Mammary epithelial cell (primary cell): ENCODE measurements at regions of chr11 and their contacts with region 1.

Region 1: DNA sequence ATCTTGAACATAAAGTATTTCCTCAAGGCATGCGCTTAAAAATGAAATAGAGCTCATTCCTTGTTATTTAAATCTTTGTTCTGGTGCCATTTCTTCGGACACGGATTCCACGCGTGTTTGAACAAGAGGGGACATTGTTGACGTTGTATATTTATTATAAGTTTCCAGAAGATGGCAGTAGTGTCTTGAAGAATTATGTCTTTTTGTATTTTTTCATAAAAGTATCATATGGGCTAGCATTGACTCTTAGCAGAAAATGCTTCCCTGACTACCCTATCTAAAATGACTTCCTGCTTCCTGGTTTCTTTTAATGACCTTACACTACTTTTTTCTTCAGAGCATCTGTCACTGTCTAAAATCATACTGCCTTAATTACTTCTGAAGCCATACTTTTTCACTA is 20.4 kb downstream of the BIRC2 start:
- DNase-seq: no peak
- H3K4me3 ChIP-seq: no peak overlapping the region
- H3K27ac ChIP-seq: no peak overlapping the region
- H3K4me1 ChIP-seq: no peaks in the 10 kb centered on the region
- H3K27me3 ChIP-seq: no peaks in the 10 kb centered on the region
- CTCF ChIP-seq: peak in 1 of 2 donors; percentile 4

Region 2: GRCh38 chr11:102341844-102342318 is 25.5 kb before region 1 on chr11:
- CTCF ChIA-PET with region 1: interaction called, 13 read pairs
- dilution Hi-C with region 1: no loop called
- in situ Hi-C with region 1: no loop called
- intact Hi-C with region 1: no loop called
- DNase-seq: peak; percentile 72
- H3K4me3 ChIP-seq: no peak overlapping the region
- H3K27ac ChIP-seq: no peak overlapping the region
- H3K4me1 ChIP-seq: peaks cover 12% of the 10 kb centered on the region
- H3K27me3 ChIP-seq: no peaks in the 10 kb centered on the region
- CTCF ChIP-seq: peak; percentile 79 to 85